BJ (cell line): ENCODE measurements at regions of chrX and their contacts with region 1.

Region 1: DNA sequence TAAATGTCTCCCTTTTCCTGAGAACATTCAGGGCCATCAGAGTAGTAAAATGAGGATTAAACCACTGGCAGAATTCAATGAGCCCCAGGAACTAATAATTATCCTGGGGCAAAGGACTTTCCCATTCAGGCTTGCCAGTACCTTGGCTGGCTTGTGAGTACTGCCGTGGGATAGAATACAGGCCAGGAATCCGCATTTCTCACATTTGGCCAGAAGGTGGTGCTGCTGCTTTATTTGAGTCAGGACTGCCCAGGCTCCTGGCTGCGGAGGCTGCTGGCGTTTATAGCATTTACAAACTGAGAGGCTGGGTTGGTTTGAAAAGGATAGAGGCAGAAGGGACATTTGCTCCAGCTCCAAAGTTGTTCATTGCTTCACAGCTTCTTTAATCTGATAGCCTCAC is 91.4 kb downstream of the RTL9 start:
- DNase-seq: no peak
- H3K4me3 ChIP-seq: no peak overlapping the region
- H3K27me3 ChIP-seq: peaks cover 2% of the 10 kb centered on the region; the same call in 1 of the 2 replicates
- CTCF ChIP-seq: peak; percentile 60

Region 2: DNA sequence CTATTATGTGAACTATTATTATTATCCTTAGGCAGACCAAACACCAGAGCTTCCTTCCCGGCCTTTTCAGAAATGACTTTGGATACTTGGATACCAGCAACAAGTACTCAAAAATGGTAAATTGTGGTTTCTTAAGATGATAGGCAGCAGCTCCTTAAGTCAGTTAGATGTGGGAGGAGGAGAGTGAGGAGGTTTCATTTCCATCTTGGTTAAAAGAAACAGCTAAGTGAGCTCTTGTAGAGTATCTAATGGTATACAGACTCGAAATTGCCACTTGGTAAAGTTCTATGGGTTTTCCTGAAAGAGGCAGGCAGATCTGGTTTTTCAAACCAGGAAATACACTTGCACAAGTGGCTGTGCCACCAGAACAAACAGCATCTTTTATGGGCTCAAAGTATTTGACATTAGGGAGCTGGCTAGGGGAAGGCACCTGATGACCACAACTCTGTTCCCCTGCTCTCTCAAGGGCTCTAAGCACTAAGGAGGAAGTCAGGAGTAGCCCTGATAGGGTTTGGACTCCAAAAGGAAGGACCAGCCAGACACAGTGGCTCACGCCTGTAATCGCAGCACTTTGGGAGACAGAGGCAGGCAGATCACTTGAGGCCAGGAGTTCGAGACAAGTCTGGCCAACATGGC is 316.2 kb before region 1 on chrX:
- CTCF ChIA-PET with region 1: no interaction called
- POLR2A ChIA-PET with region 1: no interaction called
- DNase-seq: no peak
- H3K4me3 ChIP-seq: no peak overlapping the region
- H3K27me3 ChIP-seq: no peaks in the 10 kb centered on the region
- CTCF ChIP-seq: no peak

Region 3: GRCh38 chrX:110853610-110854009 is 403.6 kb after region 1 on chrX:
- CTCF ChIA-PET with region 1: interaction called, 11 read pairs
- POLR2A ChIA-PET with region 1: no interaction called
- DNase-seq: no peak
- H3K4me3 ChIP-seq: no peak overlapping the region
- H3K27me3 ChIP-seq: 0 out of 2 replicates have a peak, but pooled peaks cover 1% of the 10 kb centered on the region
- CTCF ChIP-seq: peak; percentile 35